Breast epithelium (tissue), 4 donors: ENCODE measurements at regions of chr1 and their contacts with region 1.

Region 1: DNA sequence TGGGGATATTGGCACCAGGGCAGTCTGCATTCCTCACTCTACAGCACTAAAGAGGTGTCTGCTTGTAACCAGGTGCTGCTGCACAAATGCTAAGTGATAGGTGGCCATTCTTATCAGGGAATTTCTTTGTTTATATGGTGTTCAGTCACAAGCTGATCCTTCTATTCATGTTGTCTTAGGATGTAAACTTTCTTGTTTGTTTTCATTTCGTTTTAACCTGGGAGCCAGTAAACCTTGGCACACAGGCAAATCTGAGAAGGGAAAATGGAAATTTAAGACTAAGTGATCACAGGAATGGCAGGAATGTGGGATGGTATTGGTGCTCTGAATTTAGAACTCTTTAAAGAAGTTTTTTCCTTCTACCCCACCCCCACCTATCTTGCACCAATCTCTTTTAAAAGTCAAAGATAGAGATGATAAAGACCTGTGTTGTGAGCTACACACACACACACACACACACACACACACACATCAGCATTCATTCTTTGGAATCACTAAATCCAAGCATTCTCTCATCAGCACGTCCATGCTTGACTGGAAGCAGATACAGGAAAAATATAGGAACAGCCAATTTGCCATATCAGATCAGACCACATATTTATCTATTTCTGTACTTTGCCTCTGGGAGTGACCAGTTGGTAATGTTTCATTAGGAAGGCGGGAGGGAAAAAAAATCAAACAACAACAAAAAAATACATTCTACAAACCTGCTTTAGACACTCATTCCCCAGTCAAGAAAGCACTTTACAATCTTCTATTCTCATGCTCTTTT is 451.4 kb upstream of the ADGRL2 start:
- DNase-seq: no peak
- H3K4me3 ChIP-seq: no peak overlapping the region
- H3K27ac ChIP-seq: no peak overlapping the region
- H3K4me1 ChIP-seq: no peaks in the 10 kb centered on the region
- H3K27me3 ChIP-seq: no peaks in the 10 kb centered on the region
- CTCF ChIP-seq: no peak
- POLR2A ChIP-seq: no peak

Region 2: DNA sequence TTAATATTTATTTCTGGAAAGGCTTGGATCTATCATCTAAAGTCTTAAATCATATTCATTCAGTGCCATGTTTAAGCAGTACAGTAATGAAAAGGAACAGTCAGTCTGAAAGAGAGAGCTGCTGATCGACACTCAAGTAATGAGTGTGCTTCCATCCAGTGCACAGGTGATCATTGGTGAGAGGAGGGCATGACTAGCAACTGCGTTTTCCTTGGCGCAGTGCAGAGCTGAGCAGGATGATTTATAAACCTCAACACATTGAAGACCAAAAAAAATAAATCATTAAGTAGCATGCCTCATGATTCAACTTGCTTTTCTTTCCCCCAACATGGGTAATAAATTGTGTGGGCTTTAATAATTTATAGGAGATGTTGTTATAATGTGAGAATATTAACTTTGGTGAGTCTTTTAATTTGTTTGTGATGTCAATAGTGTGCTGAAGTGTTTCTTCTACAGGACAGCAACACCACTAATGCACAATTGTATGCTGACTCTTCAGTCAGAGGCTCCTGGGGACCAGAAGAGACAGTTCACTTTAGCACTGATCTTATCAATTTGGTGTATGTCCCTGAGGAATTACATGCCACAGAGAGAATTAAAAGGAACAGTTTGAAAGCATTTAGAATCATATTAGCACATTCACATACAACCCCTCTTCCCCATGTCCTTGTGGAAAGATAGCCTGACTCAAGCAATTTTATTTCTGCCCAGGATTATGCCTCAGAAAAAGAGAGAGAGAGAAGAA is 251.7 kb after region 1 on chr1:
- intact Hi-C with region 1: loop called (anchors 10 kb)
- DNase-seq: no peak
- H3K4me3 ChIP-seq: no peak overlapping the region
- H3K27ac ChIP-seq: no peak overlapping the region
- H3K4me1 ChIP-seq: no peaks in the 10 kb centered on the region
- H3K27me3 ChIP-seq: no peaks in the 10 kb centered on the region
- CTCF ChIP-seq: no peak
- POLR2A ChIP-seq: no peak

Region 3: GRCh38 chr1:82227306-82228095 is 878.1 kb after region 1 on chr1:
- intact Hi-C with region 1: no loop called
- DNase-seq: peak in 1 of 2 donors; percentile 60
- H3K4me3 ChIP-seq: no peak overlapping the region
- H3K27ac ChIP-seq: peak overlapping the region; percentile 57 to 58
- H3K4me1 ChIP-seq: peaks cover 4 to 15% of the 10 kb centered on the region in 2 donors
- H3K27me3 ChIP-seq: no peaks in the 10 kb centered on the region
- CTCF ChIP-seq: no peak
- POLR2A ChIP-seq: no peak